AG04449 (cell line): ENCODE measurements at regions of chr1 and their contacts with region 1.

Region 1: DNA sequence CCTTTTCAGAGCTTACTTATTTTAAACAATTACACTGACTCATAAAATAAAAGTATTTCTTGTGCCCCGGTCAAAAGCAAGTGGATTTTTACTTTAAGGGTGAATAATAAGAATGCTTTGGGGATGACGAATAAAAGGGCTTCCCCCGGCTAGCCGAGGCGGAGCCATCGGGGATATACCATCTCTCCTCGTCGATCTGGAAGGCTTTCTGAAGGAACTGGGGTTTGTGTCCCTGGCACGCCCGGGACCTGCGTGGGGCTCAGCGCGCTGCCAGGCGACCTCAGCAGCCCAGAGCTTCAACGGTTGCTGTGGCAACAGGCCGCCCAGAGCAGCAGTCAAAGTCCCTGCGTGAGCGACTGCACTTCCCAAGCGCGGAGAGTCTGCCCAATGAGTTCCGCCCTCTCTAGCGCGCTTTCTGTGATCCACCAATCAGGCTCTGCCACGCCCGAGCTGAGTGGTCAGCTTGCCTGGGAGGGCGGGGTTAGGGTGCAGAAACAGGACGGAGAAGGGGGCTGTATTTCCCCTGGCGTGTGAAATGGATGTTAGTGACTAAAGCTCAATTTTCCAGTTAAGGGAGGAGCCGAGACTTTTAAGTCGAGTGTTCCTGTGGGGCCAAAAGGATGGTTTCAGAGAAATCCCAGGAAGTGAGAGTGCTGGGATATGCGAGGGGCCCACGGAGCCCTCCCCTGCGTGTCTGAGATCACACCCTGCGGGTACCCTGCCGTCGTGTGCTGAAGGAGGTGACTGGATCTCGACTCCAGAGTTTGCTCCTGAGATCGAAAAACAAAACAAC is 33.0 kb upstream of the MGST3 start:
- DNase-seq: peak; percentile 74
- H3K4me3 ChIP-seq: peak overlapping the region; percentile 76
- CTCF ChIP-seq: no peak

Region 2: GRCh38 chr1:165257969-165258459 is 340.1 kb before region 1 on chr1:
- CTCF ChIA-PET with region 1: interaction called, 12 read pairs
- POLR2A ChIA-PET with region 1: no interaction called
- DNase-seq: no peak
- H3K4me3 ChIP-seq: no peak overlapping the region
- CTCF ChIP-seq: peak; percentile 42

Region 3: GRCh38 chr1:165403835-165404482 is 194.1 kb before region 1 on chr1:
- CTCF ChIA-PET with region 1: interaction called, 277 read pairs
- POLR2A ChIA-PET with region 1: no interaction called
- DNase-seq: no peak
- H3K4me3 ChIP-seq: no peak overlapping the region
- CTCF ChIP-seq: peak; percentile 18

Region 4: DNA sequence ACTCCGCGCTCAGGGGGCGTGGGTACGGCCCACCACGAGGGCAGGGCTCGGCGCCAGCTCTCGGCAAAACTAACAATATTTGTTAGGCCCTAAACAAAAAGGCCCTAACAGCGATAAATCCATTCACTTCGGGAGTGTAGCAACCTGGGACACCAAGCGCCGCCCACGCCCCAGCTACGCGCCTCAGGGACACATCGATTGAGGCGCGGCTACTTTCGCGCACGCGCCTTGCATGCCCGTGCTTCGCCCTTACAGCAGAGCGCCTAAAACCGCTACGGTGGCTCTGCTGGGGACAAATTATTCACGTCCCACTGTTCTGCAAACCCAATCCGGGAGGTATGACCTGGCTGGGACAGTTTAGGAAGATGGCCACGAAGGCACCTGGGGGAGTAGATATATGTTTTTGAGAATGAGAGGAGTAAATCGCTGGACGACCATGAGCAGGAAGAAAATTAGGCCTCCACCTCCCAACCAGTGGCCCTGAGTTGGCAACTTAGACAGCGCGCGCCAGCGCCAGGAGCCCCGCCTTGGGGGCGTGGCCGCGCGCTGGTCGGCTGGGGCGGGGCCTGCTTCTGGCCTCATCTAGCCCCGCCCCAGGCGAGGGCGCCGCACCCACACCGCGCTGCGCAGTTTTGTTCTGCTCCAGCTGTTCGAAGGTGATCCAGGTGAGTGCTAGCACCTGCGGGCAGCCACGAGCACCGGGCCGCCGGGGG is 32.7 kb after region 1 on chr1 and contains the start of gene MGST3:
- CTCF ChIA-PET with region 1: interaction called, 21 read pairs
- POLR2A ChIA-PET with region 1: no interaction called
- DNase-seq: peak; percentile 65
- H3K4me3 ChIP-seq: peak within 1 kb of the TSS; percentile 97
- CTCF ChIP-seq: no peak

Region 5: GRCh38 chr1:165914136-165914798 is 316.2 kb after region 1 on chr1:
- CTCF ChIA-PET with region 1: interaction called, 131 read pairs
- POLR2A ChIA-PET with region 1: no interaction called
- DNase-seq: no peak
- H3K4me3 ChIP-seq: no peak overlapping the region
- CTCF ChIP-seq: peak; percentile 80